ENCODE measurements at regions of chr2 and their contacts with region 1.

Region 1: DNA sequence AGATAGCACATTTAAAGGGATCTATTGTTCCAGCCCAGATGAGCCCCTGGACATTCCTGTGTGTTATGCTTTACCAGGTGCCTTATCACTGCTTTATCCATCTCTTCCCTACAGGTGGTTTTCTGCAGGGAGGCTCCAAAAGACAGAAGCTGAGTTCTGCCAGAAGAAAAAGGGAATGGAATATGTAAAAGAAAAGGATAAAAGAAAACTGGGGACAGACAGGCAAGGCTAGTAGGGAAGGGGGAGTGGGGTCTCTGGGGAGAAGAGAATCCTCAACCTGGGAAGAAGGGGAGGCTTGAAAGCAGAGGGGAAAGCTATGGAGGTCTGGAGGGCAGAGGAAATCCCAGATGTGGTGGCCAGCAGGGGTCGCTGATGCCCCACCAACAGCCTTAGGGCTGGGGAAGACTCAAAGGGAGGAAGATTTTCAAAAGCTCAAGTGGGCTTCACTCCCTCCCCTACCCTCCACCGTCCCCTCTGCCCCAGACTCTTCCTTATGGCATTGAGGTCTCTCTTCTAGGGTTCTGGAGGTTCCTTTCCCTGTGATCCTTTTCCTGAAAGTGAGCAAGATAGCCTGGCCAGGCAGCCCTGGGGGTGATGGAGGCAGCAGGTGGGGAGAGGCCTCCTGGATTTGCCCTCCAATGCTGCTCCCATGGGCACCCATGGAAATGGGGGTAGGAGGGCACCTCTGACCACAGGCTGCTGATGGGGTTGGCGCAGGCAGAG is 178.1 kb upstream of the PKDCC start:
- DNase-seq: peak; percentile 44 to 83 (median 75)
- ATAC-seq: peak; percentile 83
- H3K4me3 ChIP-seq: no peak overlapping the region
- H3K4me3 Mint-ChIP-seq: no peak overlapping the region
- H3K27ac ChIP-seq: no peak overlapping the region
- H3K27ac Mint-ChIP-seq: no peak overlapping the region
- H3K4me1 ChIP-seq: no peaks in the 10 kb centered on the region
- H3K4me1 Mint-ChIP-seq: peaks cover 19% of the 10 kb centered on the region
- H3K27me3 ChIP-seq: no peaks in the 10 kb centered on the region
- H3K27me3 Mint-ChIP-seq: peaks cover 5% of the 10 kb centered on the region
- CTCF ChIP-seq: peak; percentile 76

Region 2: GRCh38 chr2:41853427-41854216 is 16.1 kb before region 1 on chr2:
- CTCF ChIA-PET with region 1: interaction called, 29 read pairs
- POLR2A ChIA-PET with region 1: no interaction called
- intact Hi-C with region 1: no loop called
- DNase-seq: peak in 3 of 9 experiments; percentile 15 to 40 (median 29)
- ATAC-seq: no peak
- H3K4me3 ChIP-seq: no peak overlapping the region
- H3K4me3 Mint-ChIP-seq: no peak overlapping the region
- H3K27ac ChIP-seq: no peak overlapping the region
- H3K27ac Mint-ChIP-seq: no peak overlapping the region
- H3K4me1 ChIP-seq: no peaks in the 10 kb centered on the region
- H3K4me1 Mint-ChIP-seq: no peaks in the 10 kb centered on the region
- H3K27me3 ChIP-seq: peaks cover 0 to 4% of the 10 kb centered on the region in 2 experiments
- H3K27me3 Mint-ChIP-seq: peaks cover 24% of the 10 kb centered on the region
- CTCF ChIP-seq: peak; percentile 31

Region 3: GRCh38 chr2:42238644-42239288 is 369.1 kb after region 1 on chr2:
- CTCF ChIA-PET with region 1: interaction called, 4 read pairs
- POLR2A ChIA-PET with region 1: no interaction called
- intact Hi-C with region 1: loop called (anchors 10 kb)
- DNase-seq: peak in 7 of 9 experiments; percentile 10 to 60 (median 31)
- ATAC-seq: peak; percentile 56
- H3K4me3 ChIP-seq: no peak overlapping the region
- H3K4me3 Mint-ChIP-seq: no peak overlapping the region
- H3K27ac ChIP-seq: no peak overlapping the region
- H3K27ac Mint-ChIP-seq: no peak overlapping the region
- H3K4me1 ChIP-seq: peaks cover 40% of the 10 kb centered on the region
- H3K4me1 Mint-ChIP-seq: peaks cover 87% of the 10 kb centered on the region
- H3K27me3 ChIP-seq: no peaks in the 10 kb centered on the region
- H3K27me3 Mint-ChIP-seq: no peaks in the 10 kb centered on the region
- CTCF ChIP-seq: no peak

Region 4: GRCh38 chr2:42274863-42275262 is 405.2 kb after region 1 on chr2:
- CTCF ChIA-PET with region 1: no interaction called
- POLR2A ChIA-PET with region 1: no interaction called
- intact Hi-C with region 1: no loop called
- DNase-seq: no peak
- ATAC-seq: no peak
- H3K4me3 ChIP-seq: no peak overlapping the region
- H3K4me3 Mint-ChIP-seq: no peak overlapping the region
- H3K27ac ChIP-seq: no peak overlapping the region
- H3K27ac Mint-ChIP-seq: no peak overlapping the region
- H3K4me1 ChIP-seq: no peaks in the 10 kb centered on the region
- H3K4me1 Mint-ChIP-seq: peaks cover 8% of the 10 kb centered on the region
- H3K27me3 ChIP-seq: no peaks in the 10 kb centered on the region
- H3K27me3 Mint-ChIP-seq: no peaks in the 10 kb centered on the region
- CTCF ChIP-seq: no peak

Region 5: GRCh38 chr2:42328148-42328833 is 458.6 kb after region 1 on chr2:
- CTCF ChIA-PET with region 1: interaction called, 7 read pairs
- POLR2A ChIA-PET with region 1: no interaction called
- intact Hi-C with region 1: loop called (anchors 1 kb)
- DNase-seq: peak in 2 of 9 experiments; percentile 36 to 50
- ATAC-seq: peak; percentile 45
- H3K4me3 ChIP-seq: no peak overlapping the region
- H3K4me3 Mint-ChIP-seq: no peak overlapping the region
- H3K27ac ChIP-seq: no peak overlapping the region
- H3K27ac Mint-ChIP-seq: peak overlapping the region; percentile 43
- H3K4me1 ChIP-seq: no peaks in the 10 kb centered on the region
- H3K4me1 Mint-ChIP-seq: peaks cover 7% of the 10 kb centered on the region
- H3K27me3 ChIP-seq: no peaks in the 10 kb centered on the region
- H3K27me3 Mint-ChIP-seq: no peaks in the 10 kb centered on the region
- CTCF ChIP-seq: peak; percentile 55